Astrocyte of the cerebellum (primary cell): ENCODE measurements at regions of chr7 and their contacts with region 1.

Region 1: GRCh38 chr7:121195874-121196755 is 132.7 kb upstream of the WNT16 start:
- DNase-seq: no peak
- H3K4me3 ChIP-seq: no peak overlapping the region
- CTCF ChIP-seq: no peak

Region 2: GRCh38 chr7:120838281-120838682 is 357.8 kb before region 1 on chr7:
- in situ Hi-C with region 1: no loop called
- DNase-seq: no peak
- H3K4me3 ChIP-seq: no peak overlapping the region
- CTCF ChIP-seq: no peak

Region 3: GRCh38 chr7:121132940-121133339 is 63.2 kb before region 1 on chr7:
- in situ Hi-C with region 1: loop called (anchors 5 kb)
- DNase-seq: no peak
- H3K4me3 ChIP-seq: no peak overlapping the region
- CTCF ChIP-seq: no peak

Region 4: GRCh38 chr7:121228779-121229178 is 32.7 kb after region 1 on chr7:
- in situ Hi-C with region 1: no loop called
- DNase-seq: no peak
- H3K4me3 ChIP-seq: no peak overlapping the region
- CTCF ChIP-seq: no peak

Region 5: DNA sequence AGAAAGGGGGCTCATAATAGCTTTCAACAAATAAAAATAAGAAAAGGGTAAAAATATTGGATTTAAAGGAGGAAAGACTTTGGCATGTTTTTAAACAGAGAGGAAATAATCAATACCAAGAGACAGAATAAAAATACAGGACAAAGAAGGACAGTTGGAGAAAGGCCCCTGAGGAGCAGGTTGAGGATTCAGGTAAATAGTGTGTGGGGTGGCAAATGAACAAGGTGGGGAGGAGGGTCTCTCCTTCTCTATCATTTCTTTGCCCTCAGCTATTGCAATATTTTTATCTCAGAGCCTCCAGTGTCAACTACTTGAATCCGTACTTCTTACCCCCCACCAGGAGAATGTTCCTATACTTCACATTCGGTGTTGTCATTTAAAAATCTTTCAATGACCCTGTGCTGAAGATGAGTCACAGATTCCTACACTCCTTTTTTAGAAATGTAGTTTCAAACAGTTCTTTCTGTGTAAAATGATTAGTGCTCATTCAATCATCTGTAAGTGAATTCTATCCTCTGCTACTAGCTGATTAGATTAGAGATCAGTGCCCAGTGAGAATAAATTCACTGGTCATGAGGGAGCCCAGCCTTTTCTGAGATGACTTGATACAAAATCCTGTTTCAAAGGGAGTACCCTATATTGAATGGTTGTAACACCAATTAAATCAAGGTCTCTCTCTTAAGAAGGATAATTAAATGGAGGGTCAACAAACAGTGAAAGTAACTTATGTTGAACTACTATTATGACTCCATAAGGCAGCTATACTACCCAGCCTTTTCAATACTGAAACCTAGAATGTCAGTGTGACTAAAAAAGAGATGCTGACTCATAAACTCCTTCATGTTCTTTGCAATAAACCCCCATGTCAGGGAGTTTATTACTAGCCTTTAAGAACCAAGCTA is 82.3 kb after region 1 on chr7:
- in situ Hi-C with region 1: no loop called
- DNase-seq: no peak
- H3K4me3 ChIP-seq: no peak overlapping the region
- CTCF ChIP-seq: no peak

Region 6: DNA sequence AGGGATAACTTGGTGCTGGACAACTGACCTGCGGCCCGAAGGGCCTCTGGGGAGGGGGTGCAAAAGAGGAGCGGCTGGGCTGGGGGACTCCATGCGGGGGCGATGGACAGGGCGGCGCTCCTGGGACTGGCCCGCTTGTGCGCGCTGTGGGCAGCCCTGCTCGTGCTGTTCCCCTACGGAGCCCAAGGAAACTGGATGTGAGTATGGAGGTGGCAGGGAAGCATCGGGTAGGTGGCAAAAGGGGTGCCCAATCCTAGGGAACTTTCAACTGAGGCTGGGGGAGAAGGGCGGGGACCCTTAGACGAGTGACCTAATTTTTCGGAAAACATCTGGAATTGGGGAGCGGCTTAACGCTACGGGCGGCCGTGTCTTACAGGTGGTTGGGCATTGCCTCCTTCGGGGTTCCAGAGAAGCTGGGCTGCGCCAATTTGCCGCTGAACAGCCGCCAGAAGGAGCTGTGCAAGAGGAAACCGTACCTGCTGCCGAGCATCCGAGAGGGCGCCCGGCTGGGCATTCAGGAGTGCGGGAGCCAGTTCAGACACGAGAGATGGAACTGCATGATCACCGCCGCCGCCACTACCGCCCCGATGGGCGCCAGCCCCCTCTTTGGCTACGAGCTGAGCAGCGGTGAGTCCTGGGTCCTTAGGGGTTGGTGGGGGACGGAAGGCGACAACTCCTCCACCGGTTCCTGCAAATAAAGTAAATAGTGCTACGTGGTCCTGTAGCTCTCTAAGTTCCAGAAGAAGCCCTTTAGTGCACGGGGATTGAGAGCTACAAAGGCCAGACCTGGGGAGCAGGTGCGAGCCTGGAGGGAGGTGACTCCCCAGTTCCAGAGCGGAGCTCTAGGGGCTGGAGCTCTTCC is 133.3 kb after region 1 on chr7:
- in situ Hi-C with region 1: loop called (anchors 10 kb)
- DNase-seq: no peak
- H3K4me3 ChIP-seq: peak overlapping the region; percentile 53
- CTCF ChIP-seq: peak; percentile 17